Activated CD8-positive, alpha-beta T cell treated with anti-CD3 and anti-CD28 coated beads for 36 hours (primary cell): ENCODE measurements at regions of chr1 and their contacts with region 1.

Region 1: DNA sequence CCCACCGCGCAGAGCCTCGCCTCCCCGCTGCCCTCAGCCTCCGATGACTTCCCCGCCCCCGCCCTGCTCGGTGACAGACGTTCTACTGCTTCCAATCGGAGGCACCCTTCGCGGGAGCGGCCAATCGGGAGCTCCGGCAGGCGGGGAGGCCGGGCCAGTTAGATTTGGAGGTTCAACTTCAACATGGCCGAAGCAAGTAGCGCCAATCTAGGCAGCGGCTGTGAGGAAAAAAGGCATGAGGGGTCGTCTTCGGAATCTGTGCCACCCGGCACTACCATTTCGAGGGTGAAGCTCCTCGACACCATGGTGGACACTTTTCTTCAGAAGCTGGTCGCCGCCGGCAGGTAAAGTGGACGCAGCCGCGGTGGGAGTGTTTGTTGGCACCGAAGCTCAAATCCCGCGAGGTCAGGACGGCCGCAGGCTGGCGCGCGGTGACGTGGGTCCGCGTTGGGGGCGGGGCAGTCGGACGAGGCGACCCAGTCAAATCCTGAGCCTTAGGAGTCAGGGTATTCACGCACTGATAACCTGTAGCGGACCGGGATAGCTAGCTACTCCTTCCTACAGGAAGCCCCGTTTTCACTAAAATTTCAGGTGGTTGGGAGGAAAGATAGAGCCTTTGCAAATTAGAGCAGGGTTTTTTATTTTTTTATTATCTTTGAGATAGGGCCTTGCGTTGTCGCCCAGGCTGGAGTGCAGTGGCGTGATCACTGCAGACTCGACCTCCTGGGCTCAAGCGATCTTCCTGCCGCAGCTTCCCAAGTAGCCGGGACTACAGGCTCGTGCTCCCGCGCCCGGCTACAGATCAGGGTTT is at the start of gene PMF1:
- DNase-seq: peak; percentile 99
- ATAC-seq: peak; percentile 92
- H3K4me3 Mint-ChIP-seq: peak within 1 kb of the TSS; percentile 96
- H3K27ac Mint-ChIP-seq: peak within 1 kb of the TSS; percentile 98
- H3K4me1 Mint-ChIP-seq: peaks cover 38% of the 10 kb centered on the region
- H3K27me3 Mint-ChIP-seq: no peaks in the 10 kb centered on the region
- CTCF ChIP-seq: no peak
- total RNA-seq, gene PMF1: 89.4 to 93.7 TPM

Region 2: DNA sequence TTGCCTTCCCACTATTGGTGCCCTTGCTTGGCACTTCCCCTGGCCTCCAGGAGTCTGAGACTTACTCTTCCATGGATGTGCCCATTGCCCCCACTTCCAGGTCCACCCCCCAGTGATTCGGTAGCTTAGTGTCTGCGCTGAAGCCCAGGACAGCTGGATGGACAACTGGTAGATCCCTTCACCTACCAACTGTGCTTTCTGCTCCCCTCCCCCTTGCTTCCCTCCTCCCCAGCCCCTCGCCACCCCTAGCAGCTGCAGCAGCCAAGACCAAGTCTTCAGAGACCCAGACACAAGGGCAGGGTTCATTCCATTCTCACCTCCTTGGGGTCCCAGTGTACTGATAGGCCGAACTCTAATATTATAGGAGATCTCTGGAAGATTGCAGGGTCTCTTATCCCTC is 91.6 kb before region 1 on chr1:
- CTCF ChIA-PET with region 1: no interaction called
- POLR2A ChIA-PET with region 1: no interaction called
- intact Hi-C with region 1: no loop called
- DNase-seq: no peak
- ATAC-seq: no peak
- H3K4me3 Mint-ChIP-seq: no peak overlapping the region
- H3K27ac Mint-ChIP-seq: no peak overlapping the region
- H3K4me1 Mint-ChIP-seq: peaks cover 50% of the 10 kb centered on the region
- H3K27me3 Mint-ChIP-seq: peaks cover 1% of the 10 kb centered on the region
- CTCF ChIP-seq: no peak

Region 3: DNA sequence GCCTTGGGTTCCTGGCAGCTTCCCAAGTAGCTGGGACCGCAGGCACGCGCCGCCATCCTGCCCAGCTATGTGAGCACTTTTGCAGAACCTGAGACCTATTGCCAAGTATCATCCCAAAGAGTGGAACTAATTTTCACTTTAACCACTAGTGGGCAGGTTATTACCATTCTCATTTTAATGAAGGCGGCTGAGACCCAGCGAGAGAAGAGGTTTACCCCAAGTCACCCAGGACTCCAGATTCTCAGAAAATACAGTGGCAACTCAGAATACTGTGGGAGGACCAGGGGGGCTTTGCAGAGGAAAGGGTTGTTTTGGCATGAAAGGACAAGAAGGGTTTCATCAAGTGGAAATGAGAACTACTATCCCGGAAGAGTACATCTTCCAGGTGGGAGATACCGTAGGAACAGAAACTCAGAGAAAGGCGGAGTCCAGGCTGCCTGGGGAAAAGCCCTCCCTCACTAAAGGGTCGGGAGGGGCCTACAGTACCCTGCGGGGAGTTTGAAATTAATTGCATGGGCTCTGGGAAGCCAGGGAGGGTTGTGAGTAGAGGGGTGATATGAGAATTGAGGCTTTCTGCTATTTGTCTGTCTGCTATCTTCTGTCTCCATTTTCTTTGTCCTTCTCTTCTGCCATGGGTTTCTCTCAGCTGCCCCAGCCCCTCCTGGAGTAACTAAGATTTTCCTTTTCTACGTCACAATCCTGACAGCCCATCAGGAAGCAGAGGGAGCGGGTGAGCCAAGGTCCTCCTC is 66.8 kb before region 1 on chr1:
- CTCF ChIA-PET with region 1: interaction called, 7 read pairs
- POLR2A ChIA-PET with region 1: interaction called, 24 read pairs
- intact Hi-C with region 1: no loop called
- DNase-seq: peak; percentile 68
- ATAC-seq: peak; percentile 74
- H3K4me3 Mint-ChIP-seq: peak overlapping the region; percentile 58
- H3K27ac Mint-ChIP-seq: peak overlapping the region; percentile 90
- H3K4me1 Mint-ChIP-seq: peaks cover 52% of the 10 kb centered on the region
- H3K27me3 Mint-ChIP-seq: no peaks in the 10 kb centered on the region
- CTCF ChIP-seq: peak; percentile 68

Region 4: GRCh38 chr1:156160743-156161171 is 52.3 kb before region 1 on chr1:
- CTCF ChIA-PET with region 1: no interaction called
- POLR2A ChIA-PET with region 1: interaction called, 10 read pairs
- intact Hi-C with region 1: no loop called
- DNase-seq: peak; percentile 80
- ATAC-seq: peak; percentile 80
- H3K4me3 Mint-ChIP-seq: peak overlapping the region; percentile 63
- H3K27ac Mint-ChIP-seq: peak overlapping the region; percentile 66
- H3K4me1 Mint-ChIP-seq: peaks cover 59% of the 10 kb centered on the region
- H3K27me3 Mint-ChIP-seq: no peaks in the 10 kb centered on the region
- CTCF ChIP-seq: no peak

Region 5: DNA sequence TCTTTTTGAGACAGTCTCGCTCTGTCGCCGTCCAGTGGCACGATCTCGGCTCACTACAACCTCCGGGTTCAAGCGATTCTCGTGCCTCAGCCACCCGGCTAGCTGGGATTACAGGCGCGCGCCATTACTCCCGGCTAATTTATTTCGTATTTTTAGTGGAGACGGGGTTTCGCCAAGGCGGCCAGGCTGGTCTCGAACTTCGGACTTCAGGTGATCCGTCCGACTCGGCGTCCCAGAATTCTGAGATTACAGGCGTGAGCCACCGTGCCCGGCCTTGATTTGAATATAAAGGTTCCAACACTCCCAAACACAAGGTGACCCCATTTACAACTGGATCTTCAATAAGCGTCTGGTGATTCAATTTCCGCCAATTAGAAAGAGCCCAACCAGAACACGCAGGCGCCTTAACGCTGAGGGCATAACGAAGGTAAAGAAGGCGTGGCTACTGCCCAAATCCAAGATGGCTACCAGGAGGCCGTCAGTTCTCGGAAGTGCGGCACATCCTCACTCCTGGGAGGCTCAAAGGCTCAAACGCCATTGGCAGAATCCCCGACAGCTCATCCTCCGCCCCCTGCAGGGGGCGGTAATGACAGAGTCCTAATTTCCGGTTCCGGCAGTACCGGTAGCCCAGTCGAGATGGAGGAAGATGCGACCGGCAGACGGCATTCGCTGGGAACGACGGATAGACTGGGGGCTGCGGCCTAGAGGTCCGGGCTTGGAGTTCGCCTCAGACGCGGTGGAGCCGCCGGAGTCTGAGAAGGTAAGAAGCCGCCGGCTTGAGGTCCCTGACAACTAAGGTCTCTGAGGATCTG is 19.3 kb before region 1 on chr1 and contains the start of gene SLC25A44:
- CTCF ChIA-PET with region 1: interaction called, 12 read pairs
- POLR2A ChIA-PET with region 1: interaction called, 177 read pairs
- intact Hi-C with region 1: loop called (anchors 2 kb)
- DNase-seq: peak; percentile 98
- ATAC-seq: peak; percentile 95
- H3K4me3 Mint-ChIP-seq: no peak within 1 kb of the TSS
- H3K27ac Mint-ChIP-seq: peak within 1 kb of the TSS; percentile 97
- H3K4me1 Mint-ChIP-seq: peaks cover 57% of the 10 kb centered on the region
- H3K27me3 Mint-ChIP-seq: no peaks in the 10 kb centered on the region
- CTCF ChIP-seq: no peak
- total RNA-seq, gene SLC25A44: 41.9 to 43.0 TPM

Region 6: DNA sequence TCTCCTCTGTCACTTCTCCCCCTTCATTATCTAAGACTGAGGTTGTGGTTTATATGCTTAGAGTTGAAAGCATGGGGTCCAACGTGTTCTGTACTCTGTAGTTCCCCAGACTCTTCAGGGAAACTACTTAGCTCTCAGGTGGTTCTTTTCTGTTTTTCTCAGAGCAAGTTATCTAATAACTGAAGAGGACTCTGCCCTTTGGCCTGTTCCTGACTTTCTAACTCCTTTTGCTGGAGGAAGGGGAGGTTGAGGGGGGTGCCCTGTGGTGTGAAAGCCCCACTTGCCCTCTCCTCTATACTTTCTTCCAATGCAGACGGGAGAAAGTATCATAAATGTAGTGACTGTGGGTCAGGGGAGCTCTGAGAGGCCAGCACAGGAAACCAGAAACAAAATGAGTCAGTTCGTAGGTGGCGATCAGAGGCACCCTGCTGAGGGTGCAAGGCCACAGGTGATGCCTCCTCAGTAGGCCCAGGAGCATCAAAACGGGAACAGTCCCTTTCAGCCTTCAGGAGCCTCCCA is 14.1 kb before region 1 on chr1:
- CTCF ChIA-PET with region 1: interaction called, 12 read pairs
- POLR2A ChIA-PET with region 1: interaction called, 177 read pairs
- intact Hi-C with region 1: no loop called
- DNase-seq: peak; percentile 72
- ATAC-seq: peak; percentile 81
- H3K4me3 Mint-ChIP-seq: no peak overlapping the region
- H3K27ac Mint-ChIP-seq: no peak overlapping the region
- H3K4me1 Mint-ChIP-seq: peaks cover 60% of the 10 kb centered on the region
- H3K27me3 Mint-ChIP-seq: no peaks in the 10 kb centered on the region
- CTCF ChIP-seq: no peak

Region 7: GRCh38 chr1:156368889-156369684 is 156.0 kb after region 1 on chr1 and contains the start of gene RHBG:
- CTCF ChIA-PET with region 1: no interaction called
- POLR2A ChIA-PET with region 1: no interaction called
- intact Hi-C with region 1: no loop called
- DNase-seq: peak; percentile 19
- ATAC-seq: peak; percentile 45
- H3K4me3 Mint-ChIP-seq: peak within 1 kb of the TSS; percentile 7
- H3K27ac Mint-ChIP-seq: no peak within 1 kb of the TSS
- H3K4me1 Mint-ChIP-seq: peaks cover 2% of the 10 kb centered on the region
- H3K27me3 Mint-ChIP-seq: peaks cover 48% of the 10 kb centered on the region
- CTCF ChIP-seq: no peak
- total RNA-seq, gene RHBG: not detected